ENCODE measurements at regions of chr19 and their contacts with region 1.

Region 1: DNA sequence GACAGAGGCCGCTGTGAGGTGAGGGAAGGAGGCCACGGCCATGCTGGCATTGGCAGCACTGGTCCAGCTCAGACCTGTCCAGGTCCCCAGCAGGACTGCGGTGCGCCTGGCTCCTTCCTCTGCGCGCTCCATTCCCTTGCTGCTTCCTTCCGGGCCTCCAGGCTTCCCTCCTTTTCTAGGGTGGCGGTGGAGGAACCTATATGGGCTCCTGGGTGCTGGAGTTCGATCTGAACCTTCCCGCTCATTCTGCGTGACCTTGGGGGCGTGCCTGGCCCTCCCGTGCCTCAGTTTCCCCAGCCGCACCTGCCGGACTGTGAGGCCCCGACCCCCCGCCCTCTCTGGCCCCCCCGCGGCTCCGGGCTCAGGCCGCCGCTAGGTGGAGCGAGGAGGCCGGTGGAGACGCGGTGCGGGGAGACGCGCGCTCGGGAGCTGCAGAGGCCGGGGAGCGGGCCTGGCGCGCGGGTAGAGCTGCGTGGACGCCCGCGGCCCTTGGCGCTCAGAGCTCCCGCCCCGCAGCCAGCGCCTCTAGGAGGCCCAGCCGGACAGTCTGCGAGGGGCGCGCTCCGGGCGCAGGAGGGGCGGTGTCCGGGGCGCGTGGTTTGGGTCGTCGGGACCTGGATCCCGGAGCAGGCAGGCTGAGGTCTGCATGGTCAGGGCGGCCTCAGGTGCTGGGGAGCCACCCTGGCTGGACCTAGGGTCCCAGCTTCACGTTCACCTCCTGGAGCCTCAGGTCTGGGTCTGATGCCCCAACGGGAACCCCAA is 30.0 kb downstream of the EFNA2 start:
- DNase-seq: peak; percentile 39
- H3K4me3 ChIP-seq: peak overlapping the region in 1 of 3 experiments; percentile 13
- H3K27ac ChIP-seq: no peak overlapping the region
- H3K4me1 ChIP-seq: peaks cover 22% of the 10 kb centered on the region
- H3K27me3 ChIP-seq: peaks cover 9% of the 10 kb centered on the region
- CTCF ChIP-seq: peak; percentile 34 to 74

Region 2: DNA sequence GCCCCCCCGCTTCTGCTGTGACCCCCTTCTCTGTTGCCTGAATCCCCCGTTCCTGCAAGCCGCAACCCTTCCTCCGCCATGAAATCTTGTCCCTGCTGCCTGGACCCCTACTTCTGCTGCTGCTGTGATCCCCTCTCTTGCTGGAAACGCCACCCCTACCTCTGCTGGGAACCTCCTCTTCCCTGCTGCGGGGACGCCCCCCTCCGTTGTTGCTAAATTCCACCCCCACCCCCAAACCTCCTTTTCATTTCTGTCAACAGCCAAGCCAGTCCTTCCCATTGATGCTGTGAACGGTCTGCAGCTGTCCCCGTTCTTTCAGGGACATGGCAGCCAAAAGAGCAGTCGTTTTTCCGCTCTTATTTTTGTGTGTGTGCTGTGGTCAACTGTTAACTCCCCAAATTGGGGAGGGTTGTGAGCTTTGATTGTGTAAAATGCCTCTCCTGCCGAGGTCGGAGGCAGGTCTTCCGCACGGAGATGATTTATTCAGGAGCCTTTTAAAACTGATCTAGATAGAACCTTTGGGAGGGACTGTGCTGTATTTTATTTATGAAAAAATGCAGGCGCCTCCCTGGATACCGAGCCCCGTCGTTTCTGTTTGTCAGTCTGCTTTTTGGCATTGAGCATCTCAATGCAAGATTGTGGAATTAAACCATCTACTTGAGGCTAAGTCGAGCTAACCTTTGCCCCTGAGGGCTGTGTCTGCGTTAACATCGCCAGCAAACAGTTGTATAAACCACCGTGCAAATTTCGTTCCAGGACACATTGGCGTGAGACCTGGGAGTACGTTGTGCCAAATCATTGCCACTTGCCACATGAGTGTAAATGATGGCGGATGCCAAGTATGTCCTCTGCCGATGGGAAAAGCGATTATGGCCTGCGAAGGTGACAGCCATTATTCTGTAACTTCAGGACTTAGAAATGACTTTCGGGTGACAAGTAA is 40.2 kb after region 1 on chr19:
- CTCF ChIA-PET with region 1: no interaction called
- dilution Hi-C with region 1: loop called (anchors 5 kb)
- in situ Hi-C with region 1: no loop called
- intact Hi-C with region 1: loop called (anchors 5 kb)
- DNase-seq: peak; percentile 12
- H3K4me3 ChIP-seq: peak overlapping the region; percentile 79 to 88 (median 82)
- H3K27ac ChIP-seq: no peak overlapping the region
- H3K4me1 ChIP-seq: peaks cover 9% of the 10 kb centered on the region
- H3K27me3 ChIP-seq: no peaks in the 10 kb centered on the region
- CTCF ChIP-seq: no peak

Region 3: GRCh38 chr19:1383311-1384084 is 67.8 kb after region 1 on chr19 and contains the start of gene NDUFS7:
- CTCF ChIA-PET with region 1: no interaction called
- dilution Hi-C with region 1: no loop called
- in situ Hi-C with region 1: no loop called
- intact Hi-C with region 1: loop called (anchors 2 kb)
- DNase-seq: peak; percentile 88
- H3K4me3 ChIP-seq: peak within 1 kb of the TSS; percentile 55 to 99 (median 99)
- H3K27ac ChIP-seq: peak within 1 kb of the TSS; percentile 37
- H3K4me1 ChIP-seq: no peaks in the 10 kb centered on the region
- H3K27me3 ChIP-seq: no peaks in the 10 kb centered on the region
- CTCF ChIP-seq: no peak
- total RNA-seq, gene NDUFS7: 34.3 to 73.6 TPM

Region 4: DNA sequence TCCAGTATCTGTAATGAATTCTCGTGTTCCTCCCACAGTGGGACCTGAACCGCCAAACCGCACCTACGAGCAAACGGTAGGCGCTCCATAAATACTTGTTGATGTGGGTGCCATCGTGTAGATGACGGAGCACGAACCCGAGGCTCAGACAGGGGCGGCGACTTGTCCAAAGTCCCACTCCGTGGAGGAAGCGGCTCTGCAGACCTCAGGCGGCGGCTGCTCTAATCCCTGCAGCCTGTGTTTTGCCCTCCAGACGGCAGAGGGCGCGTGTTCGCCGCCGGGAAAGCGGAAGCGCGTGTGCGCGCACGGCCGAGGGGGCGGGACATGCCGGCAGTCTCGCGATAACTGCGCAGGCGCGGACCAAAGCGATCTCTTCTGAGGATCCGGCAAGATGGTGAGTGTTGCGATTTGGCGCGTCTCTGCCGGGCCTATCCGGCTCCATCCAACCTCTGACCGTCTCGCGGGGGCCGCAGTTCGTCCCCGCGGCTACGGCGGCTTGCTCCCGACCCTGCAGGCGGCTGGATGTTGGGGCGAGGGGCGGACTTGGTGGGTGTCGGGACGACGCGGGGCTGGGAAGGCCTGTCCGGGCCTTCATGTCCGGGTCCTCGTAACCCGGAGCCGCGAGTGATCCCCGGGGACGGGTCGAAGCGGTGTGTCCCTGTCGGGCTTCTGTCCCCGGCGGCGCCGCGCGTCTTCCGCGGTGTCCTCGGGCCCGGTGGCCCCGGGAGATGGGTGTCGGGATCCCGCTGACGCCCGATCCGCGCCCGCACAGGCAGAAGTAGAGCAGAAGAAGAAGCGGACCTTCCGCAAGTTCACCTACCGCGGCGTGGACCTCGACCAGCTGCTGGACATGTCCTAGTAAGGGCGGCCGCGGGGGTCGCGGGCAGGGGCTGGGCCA is 122.6 kb after region 1 on chr19 and contains the start of gene RPS15:
- CTCF ChIA-PET with region 1: no interaction called
- dilution Hi-C with region 1: loop called (anchors 5 kb)
- in situ Hi-C with region 1: no loop called
- intact Hi-C with region 1: loop called (anchors 2 kb)
- DNase-seq: peak; percentile 91
- H3K4me3 ChIP-seq: peak within 1 kb of the TSS; percentile 87 to 99 (median 89)
- H3K27ac ChIP-seq: peak within 1 kb of the TSS; percentile 81
- H3K4me1 ChIP-seq: peaks cover 23% of the 10 kb centered on the region
- H3K27me3 ChIP-seq: no peaks in the 10 kb centered on the region
- CTCF ChIP-seq: peak; percentile 87 to 95
- total RNA-seq, gene RPS15: 318 to 950 TPM